CD4-positive, alpha-beta memory T cell (primary cell): ENCODE measurements at regions of chr6 and their contacts with region 1.

Region 1: DNA sequence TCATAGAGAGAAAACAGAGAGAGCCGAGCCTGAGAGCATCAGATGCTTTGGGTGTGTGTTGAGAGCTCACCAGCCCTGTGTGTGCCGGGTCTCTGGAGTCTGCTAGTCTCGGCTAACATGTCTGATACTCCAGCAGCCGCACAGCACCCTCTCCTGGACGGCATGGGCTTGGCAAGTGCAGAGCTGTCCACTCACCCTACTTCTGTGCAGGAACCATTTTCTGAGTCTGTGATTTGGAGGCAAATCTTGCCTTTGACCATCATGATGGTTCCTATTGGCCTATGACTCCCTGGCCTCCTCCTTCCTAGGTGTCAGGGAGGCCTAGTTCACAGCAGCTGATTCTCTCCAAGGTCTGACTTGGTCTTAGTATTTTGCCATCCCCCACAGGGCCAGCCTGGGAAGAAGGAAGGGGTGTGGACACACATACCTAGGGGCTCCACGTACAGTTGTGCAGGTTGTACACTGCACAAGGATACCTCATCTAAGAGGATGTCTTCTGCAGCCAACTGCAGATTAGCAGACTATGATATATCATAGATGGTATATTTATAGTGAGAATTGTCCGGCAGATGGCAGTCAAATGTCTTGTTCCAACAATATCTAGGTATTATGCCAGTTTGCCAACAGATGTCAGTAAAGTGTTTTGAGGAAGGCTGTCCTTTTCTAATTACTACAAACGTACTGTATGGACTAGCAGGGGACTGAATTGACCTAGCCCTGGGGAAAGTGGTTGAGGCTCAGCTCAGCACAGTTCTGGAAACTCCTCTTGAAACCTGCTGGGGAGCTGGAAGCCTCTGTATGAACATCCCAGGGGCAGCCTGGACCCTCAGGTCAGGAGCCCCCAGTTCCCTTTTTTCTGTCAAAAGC is 13.0 kb downstream of the FGD2 start:
- DNase-seq: peak; percentile 82 to 92 (median 86)
- H3K4me3 ChIP-seq: no peak overlapping the region
- H3K4me3 Mint-ChIP-seq: peak overlapping the region in 4 of 8 donors; percentile 4 to 57 (median 28)
- H3K27ac ChIP-seq: peak overlapping the region; percentile 18
- H3K27ac Mint-ChIP-seq: peak overlapping the region; percentile 31 to 91 (median 88)
- H3K4me1 ChIP-seq: peaks cover 48% of the 10 kb centered on the region
- H3K4me1 Mint-ChIP-seq: peaks cover 37 to 49% (median 42%) of the 10 kb centered on the region in 4 donors
- H3K27me3 ChIP-seq: no peaks in the 10 kb centered on the region
- H3K27me3 Mint-ChIP-seq: no peaks in the 10 kb centered on the region

Region 2: GRCh38 chr6:36623547-36624459 is 394.6 kb before region 1 on chr6:
- CTCF ChIA-PET with region 1: interaction called, 3 read pairs
- POLR2A ChIA-PET with region 1: no interaction called
- intact Hi-C with region 1: loop called (anchors 1 kb)
- DNase-seq: peak; percentile 65 to 78 (median 73)
- H3K4me3 ChIP-seq: no peak overlapping the region
- H3K4me3 Mint-ChIP-seq: no peak overlapping the region
- H3K27ac ChIP-seq: no peak overlapping the region
- H3K27ac Mint-ChIP-seq: peak overlapping the region; percentile 32 to 82 (median 69)
- H3K4me1 ChIP-seq: peaks cover 9% of the 10 kb centered on the region
- H3K4me1 Mint-ChIP-seq: peaks cover 5 to 16% (median 9%) of the 10 kb centered on the region in 4 donors
- H3K27me3 ChIP-seq: no peaks in the 10 kb centered on the region
- H3K27me3 Mint-ChIP-seq: no peaks in the 10 kb centered on the region

Region 3: GRCh38 chr6:36874443-36875249 is 143.8 kb before region 1 on chr6 and contains the start of gene PPIL1:
- CTCF ChIA-PET with region 1: interaction called, 188 read pairs
- POLR2A ChIA-PET with region 1: interaction called, 17 read pairs
- intact Hi-C with region 1: no loop called
- DNase-seq: peak; percentile 91 to 94 (median 92)
- H3K4me3 ChIP-seq: peak within 1 kb of the TSS; percentile 95 to 96
- H3K4me3 Mint-ChIP-seq: peak within 1 kb of the TSS; percentile 95 to 100 (median 98)
- H3K27ac ChIP-seq: peak within 1 kb of the TSS; percentile 87
- H3K27ac Mint-ChIP-seq: peak within 1 kb of the TSS; percentile 91 to 100 (median 98)
- H3K4me1 ChIP-seq: peaks cover 23% of the 10 kb centered on the region
- H3K4me1 Mint-ChIP-seq: peaks cover 22 to 37% (median 31%) of the 10 kb centered on the region in 4 donors
- H3K27me3 ChIP-seq: no peaks in the 10 kb centered on the region
- H3K27me3 Mint-ChIP-seq: peaks cover 0 to 1% of the 10 kb centered on the region in 2 donors
- total RNA-seq, gene PPIL1: 8.4 to 9.2 TPM

Region 4: GRCh38 chr6:36912586-36912985 is 105.8 kb before region 1 on chr6:
- CTCF ChIA-PET with region 1: interaction called, 49 read pairs
- POLR2A ChIA-PET with region 1: interaction called, 10 read pairs
- intact Hi-C with region 1: loop called (anchors 1 kb)
- DNase-seq: peak; percentile 76 to 90 (median 82)
- H3K4me3 ChIP-seq: peak overlapping the region; percentile 8 to 22
- H3K4me3 Mint-ChIP-seq: peak overlapping the region; percentile 63 to 85 (median 78)
- H3K27ac ChIP-seq: peak overlapping the region; percentile 58
- H3K27ac Mint-ChIP-seq: peak overlapping the region; percentile 87 to 97 (median 94)
- H3K4me1 ChIP-seq: peaks cover 42% of the 10 kb centered on the region
- H3K4me1 Mint-ChIP-seq: peaks cover 26 to 49% (median 34%) of the 10 kb centered on the region in 4 donors
- H3K27me3 ChIP-seq: no peaks in the 10 kb centered on the region
- H3K27me3 Mint-ChIP-seq: no peaks in the 10 kb centered on the region

Region 5: DNA sequence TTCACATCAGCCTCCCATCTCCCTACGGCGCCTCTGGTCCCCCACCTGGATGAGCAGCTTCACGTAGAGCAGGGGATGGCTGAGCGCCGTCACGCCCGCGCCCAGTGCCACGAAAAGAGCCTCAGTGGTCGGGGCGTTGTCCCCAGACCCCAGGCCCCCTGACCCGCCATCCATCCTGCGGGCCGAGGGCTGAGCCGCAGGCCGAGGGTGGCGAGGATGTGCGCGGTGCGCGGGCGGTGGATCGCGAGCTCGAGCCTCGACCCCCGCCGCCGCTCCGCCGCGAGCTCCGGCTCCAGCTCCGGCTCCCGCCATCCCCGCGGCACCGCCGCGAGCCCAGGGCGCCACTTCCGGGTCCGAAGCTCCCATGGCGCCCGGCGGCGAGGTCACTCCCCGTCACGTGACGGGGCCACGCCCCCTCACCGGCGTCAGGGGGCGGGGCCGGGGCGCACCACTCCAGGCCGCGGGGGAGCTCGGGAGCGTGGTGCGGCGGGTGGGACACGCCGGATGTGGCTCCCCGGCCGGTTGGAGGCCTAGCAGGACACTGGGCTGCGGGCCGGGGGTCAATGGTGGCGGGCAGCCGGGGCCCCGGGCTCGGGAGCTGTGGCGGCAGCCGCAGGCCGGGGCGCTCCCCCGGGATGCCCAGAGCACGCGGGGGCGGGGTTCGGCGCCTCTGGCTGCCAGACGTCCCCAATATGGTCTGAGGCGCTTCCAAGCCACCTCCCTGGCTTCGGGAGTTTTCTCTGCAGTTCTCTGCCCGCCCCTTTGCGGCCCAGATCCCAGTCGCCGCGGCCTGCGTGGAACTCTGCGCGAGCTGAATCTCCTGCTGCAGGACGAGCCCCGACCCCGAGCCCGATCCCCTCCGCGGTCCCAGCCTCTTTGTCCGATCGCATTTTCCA is 32.4 kb before region 1 on chr6 and contains the start of gene MTCH1:
- CTCF ChIA-PET with region 1: interaction called, 35 read pairs
- POLR2A ChIA-PET with region 1: interaction called, 16 read pairs
- intact Hi-C with region 1: loop called (anchors 1 kb)
- DNase-seq: peak; percentile 89 to 95 (median 90)
- H3K4me3 ChIP-seq: peak within 1 kb of the TSS; percentile 82 to 93
- H3K4me3 Mint-ChIP-seq: peak within 1 kb of the TSS; percentile 93 to 99 (median 96)
- H3K27ac ChIP-seq: peak within 1 kb of the TSS; percentile 94
- H3K27ac Mint-ChIP-seq: peak within 1 kb of the TSS in 6 of 7 donors; percentile 92 to 98 (median 98)
- H3K4me1 ChIP-seq: peaks cover 41% of the 10 kb centered on the region
- H3K4me1 Mint-ChIP-seq: peaks cover 14 to 30% (median 16%) of the 10 kb centered on the region in 4 donors
- H3K27me3 ChIP-seq: no peaks in the 10 kb centered on the region
- H3K27me3 Mint-ChIP-seq: peaks cover 0 to 2% of the 10 kb centered on the region in 2 donors
- total RNA-seq, gene MTCH1: 142 to 151 TPM

Region 6: GRCh38 chr6:37051138-37052026 is 33.0 kb after region 1 on chr6:
- CTCF ChIA-PET with region 1: interaction called, 234 read pairs
- POLR2A ChIA-PET with region 1: interaction called, 57 read pairs
- intact Hi-C with region 1: loop called (anchors 1 kb)
- DNase-seq: peak; percentile 84 to 91 (median 84)
- H3K4me3 ChIP-seq: no peak overlapping the region
- H3K4me3 Mint-ChIP-seq: peak overlapping the region; percentile 38 to 92 (median 68)
- H3K27ac ChIP-seq: peak overlapping the region; percentile 72
- H3K27ac Mint-ChIP-seq: peak overlapping the region; percentile 31 to 94 (median 92)
- H3K4me1 ChIP-seq: peaks cover 60% of the 10 kb centered on the region
- H3K4me1 Mint-ChIP-seq: peaks cover 50 to 62% (median 55%) of the 10 kb centered on the region in 4 donors
- H3K27me3 ChIP-seq: no peaks in the 10 kb centered on the region
- H3K27me3 Mint-ChIP-seq: no peaks in the 10 kb centered on the region

Region 7: DNA sequence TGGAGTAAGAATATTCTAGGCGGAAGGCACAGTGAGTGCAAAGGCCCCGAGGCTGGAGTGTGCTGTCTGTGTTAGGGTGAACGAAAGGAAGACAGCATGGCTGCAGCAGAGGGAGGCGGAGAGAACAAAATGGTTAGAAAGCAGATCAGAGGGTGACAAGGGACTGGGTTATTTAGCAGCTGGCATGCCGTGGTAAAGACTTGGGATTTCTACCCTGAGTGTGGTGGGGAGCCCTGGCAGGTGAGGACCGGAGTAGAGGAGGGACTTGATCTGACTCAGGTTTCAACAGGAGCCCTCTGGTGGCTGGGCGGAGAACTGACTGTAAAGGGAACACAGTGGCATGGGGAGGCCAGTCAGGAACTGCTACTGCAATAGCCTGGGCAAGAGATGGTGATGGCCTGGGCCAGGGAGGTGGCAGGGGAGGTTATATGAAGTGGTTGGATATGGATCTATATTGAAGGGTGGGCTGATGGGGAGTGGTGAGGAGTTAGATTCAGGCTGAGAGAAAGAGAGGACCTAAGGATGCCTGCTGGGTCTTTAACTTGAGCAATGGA is 189.5 kb after region 1 on chr6:
- CTCF ChIA-PET with region 1: interaction called, 1,184 read pairs
- POLR2A ChIA-PET with region 1: interaction called, 148 read pairs
- intact Hi-C with region 1: loop called (anchors 1 kb)
- DNase-seq: peak; percentile 80 to 90 (median 84)
- H3K4me3 ChIP-seq: no peak overlapping the region
- H3K4me3 Mint-ChIP-seq: peak overlapping the region; percentile 26 to 74 (median 54)
- H3K27ac ChIP-seq: no peak overlapping the region
- H3K27ac Mint-ChIP-seq: peak overlapping the region; percentile 57 to 98 (median 86)
- H3K4me1 ChIP-seq: peaks cover 48% of the 10 kb centered on the region
- H3K4me1 Mint-ChIP-seq: peaks cover 39 to 58% (median 48%) of the 10 kb centered on the region in 4 donors
- H3K27me3 ChIP-seq: no peaks in the 10 kb centered on the region
- H3K27me3 Mint-ChIP-seq: no peaks in the 10 kb centered on the region